MCF 10A (cell line): ENCODE measurements at regions of chr16 and their contacts with region 1.

Region 1: DNA sequence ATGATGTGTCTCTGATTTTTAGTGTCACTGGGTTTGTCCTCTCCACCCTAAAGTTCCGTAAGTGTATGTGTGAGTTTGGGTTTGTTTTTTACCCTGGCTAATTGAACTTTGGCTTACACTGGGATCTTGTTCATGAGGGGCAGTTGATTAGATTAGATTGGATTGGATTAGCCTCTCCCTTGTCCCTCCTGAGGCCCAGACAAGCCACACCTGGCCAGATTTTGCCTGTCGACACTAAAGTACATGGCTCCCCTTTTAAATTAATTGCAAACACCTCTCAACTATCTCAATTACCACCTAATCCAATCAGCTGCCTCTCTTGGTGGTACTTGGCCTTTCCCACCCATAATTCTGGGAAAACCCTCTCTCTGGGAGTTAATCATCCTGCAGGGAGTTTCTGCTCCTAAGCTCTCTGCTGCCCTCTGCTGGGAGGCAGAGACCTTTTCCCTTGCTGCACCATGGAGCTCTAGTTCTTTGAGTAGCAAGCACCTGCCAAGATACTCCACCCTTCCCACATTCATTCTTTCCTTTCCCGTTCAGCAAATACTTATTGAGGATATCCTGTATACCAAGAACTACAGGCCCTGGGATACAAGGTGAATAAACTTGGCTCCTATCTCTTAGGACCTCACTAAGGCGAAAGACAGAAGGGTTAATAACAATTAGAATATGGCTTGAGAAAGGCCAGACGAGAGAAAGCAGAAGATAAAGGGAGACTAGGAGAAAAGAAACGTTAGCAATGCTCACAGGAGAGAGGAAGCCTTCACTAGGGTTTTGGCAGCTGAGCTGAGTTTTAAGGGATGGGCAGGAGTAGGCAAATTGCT is 60.0 kb upstream of the MPHOSPH6 start:
- DNase-seq: peak; percentile 84
- H3K4me3 Mint-ChIP-seq: no peak overlapping the region
- H3K27ac Mint-ChIP-seq: no peak overlapping the region
- H3K4me1 Mint-ChIP-seq: no peaks in the 10 kb centered on the region
- H3K27me3 Mint-ChIP-seq: peaks cover 29% of the 10 kb centered on the region
- CTCF ChIP-seq: peak; percentile 87

Region 2: GRCh38 chr16:81885976-81886586 is 343.9 kb before region 1 on chr16:
- CTCF ChIA-PET with region 1: interaction called, 31 read pairs
- POLR2A ChIA-PET with region 1: no interaction called
- intact Hi-C with region 1: loop called (anchors 1 kb)
- DNase-seq: peak; percentile 54
- H3K4me3 Mint-ChIP-seq: no peak overlapping the region
- H3K27ac Mint-ChIP-seq: no peak overlapping the region
- H3K4me1 Mint-ChIP-seq: peaks cover 13% of the 10 kb centered on the region
- H3K27me3 Mint-ChIP-seq: no peaks in the 10 kb centered on the region
- CTCF ChIP-seq: peak; percentile 47

Region 3: GRCh38 chr16:81940781-81941560 is 289.0 kb before region 1 on chr16:
- CTCF ChIA-PET with region 1: interaction called, 119 read pairs
- POLR2A ChIA-PET with region 1: no interaction called
- intact Hi-C with region 1: loop called (anchors 1 kb)
- DNase-seq: peak; percentile 66
- H3K4me3 Mint-ChIP-seq: no peak overlapping the region
- H3K27ac Mint-ChIP-seq: no peak overlapping the region
- H3K4me1 Mint-ChIP-seq: peaks cover 7% of the 10 kb centered on the region
- H3K27me3 Mint-ChIP-seq: no peaks in the 10 kb centered on the region
- CTCF ChIP-seq: peak; percentile 62

Region 4: GRCh38 chr16:82031116-82032084 is 198.6 kb before region 1 on chr16:
- CTCF ChIA-PET with region 1: interaction called, 128 read pairs
- POLR2A ChIA-PET with region 1: interaction called, 5 read pairs
- intact Hi-C with region 1: loop called (anchors 1 kb)
- DNase-seq: peak; percentile 81
- H3K4me3 Mint-ChIP-seq: no peak overlapping the region
- H3K27ac Mint-ChIP-seq: no peak overlapping the region
- H3K4me1 Mint-ChIP-seq: peaks cover 20% of the 10 kb centered on the region
- H3K27me3 Mint-ChIP-seq: no peaks in the 10 kb centered on the region
- CTCF ChIP-seq: peak; percentile 61

Region 5: GRCh38 chr16:82043680-82044584 is 186.1 kb before region 1 on chr16:
- CTCF ChIA-PET with region 1: interaction called, 10 read pairs
- POLR2A ChIA-PET with region 1: no interaction called
- intact Hi-C with region 1: no loop called
- DNase-seq: no peak
- H3K4me3 Mint-ChIP-seq: no peak overlapping the region
- H3K27ac Mint-ChIP-seq: no peak overlapping the region
- H3K4me1 Mint-ChIP-seq: peaks cover 6% of the 10 kb centered on the region
- H3K27me3 Mint-ChIP-seq: no peaks in the 10 kb centered on the region
- CTCF ChIP-seq: no peak

Region 6: DNA sequence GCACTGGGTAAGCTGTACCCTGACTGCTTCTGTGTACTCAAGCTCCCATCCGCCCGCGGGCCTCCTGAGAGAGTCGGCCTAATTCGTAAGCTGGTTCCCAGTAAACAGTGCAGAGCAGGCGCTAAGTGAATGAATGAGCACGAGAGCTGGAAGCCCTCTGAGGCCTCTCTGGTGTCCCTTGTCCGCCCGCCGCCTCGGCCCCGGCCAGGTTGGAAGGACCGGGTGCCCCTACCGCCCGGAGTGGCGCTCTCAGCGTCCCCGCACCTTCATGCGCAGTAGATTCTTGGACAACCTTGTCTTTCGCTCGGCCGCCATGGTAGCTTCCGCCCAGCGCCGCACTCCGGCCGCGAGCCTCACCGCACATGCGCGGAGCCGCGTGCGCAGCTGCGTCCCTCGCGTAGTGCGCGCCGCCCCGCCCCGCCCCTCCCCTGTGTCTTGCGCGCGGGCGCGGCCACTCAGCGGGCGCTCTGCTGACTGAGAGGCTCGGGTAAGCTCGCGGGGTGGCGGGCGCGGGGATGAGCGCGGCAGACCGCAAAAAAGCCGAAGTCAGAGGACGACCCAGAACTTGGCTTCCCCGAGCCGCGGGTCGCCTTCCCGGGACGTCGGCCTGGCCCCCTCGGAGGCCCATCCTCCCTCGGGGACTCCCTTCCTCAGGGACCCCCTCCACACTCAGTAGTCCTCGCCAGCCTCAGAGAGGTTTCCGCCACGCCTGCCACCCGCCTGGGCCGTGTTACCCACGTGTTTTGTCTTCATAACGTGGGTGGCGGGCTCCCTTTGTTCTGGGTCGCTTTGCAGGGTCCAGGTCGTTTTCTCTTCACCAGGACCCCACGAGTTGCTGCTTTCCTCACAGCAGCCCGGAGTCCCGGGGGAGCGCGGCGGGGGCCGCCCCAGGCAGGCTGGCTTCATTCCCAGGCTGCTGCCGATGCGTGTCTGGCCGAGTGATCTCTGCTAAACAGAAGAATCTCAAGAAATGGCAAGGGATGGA is 59.9 kb before region 1 on chr16 and contains the start of gene MPHOSPH6:
- CTCF ChIA-PET with region 1: interaction called, 8 read pairs
- POLR2A ChIA-PET with region 1: interaction called, 8 read pairs
- intact Hi-C with region 1: loop called (anchors 2 kb)
- DNase-seq: peak; percentile 90
- H3K4me3 Mint-ChIP-seq: peak within 1 kb of the TSS; percentile 79
- H3K27ac Mint-ChIP-seq: peak within 1 kb of the TSS; percentile 68
- H3K4me1 Mint-ChIP-seq: peaks cover 16% of the 10 kb centered on the region
- H3K27me3 Mint-ChIP-seq: peaks cover 26% of the 10 kb centered on the region
- CTCF ChIP-seq: no peak
- total RNA-seq, gene MPHOSPH6: 39.9 and 46.8 TPM in 2 replicates

Region 7: GRCh38 chr16:82240111-82240510 is 10.1 kb after region 1 on chr16:
- CTCF ChIA-PET with region 1: interaction called, 20 read pairs
- POLR2A ChIA-PET with region 1: interaction called, 3 read pairs
- intact Hi-C with region 1: no loop called
- DNase-seq: no peak
- H3K4me3 Mint-ChIP-seq: no peak overlapping the region
- H3K27ac Mint-ChIP-seq: no peak overlapping the region
- H3K4me1 Mint-ChIP-seq: no peaks in the 10 kb centered on the region
- H3K27me3 Mint-ChIP-seq: peaks cover 76% of the 10 kb centered on the region
- CTCF ChIP-seq: no peak